HCT116 (cell line): ENCODE measurements at regions of chr19 and their contacts with region 1.

Region 1: DNA sequence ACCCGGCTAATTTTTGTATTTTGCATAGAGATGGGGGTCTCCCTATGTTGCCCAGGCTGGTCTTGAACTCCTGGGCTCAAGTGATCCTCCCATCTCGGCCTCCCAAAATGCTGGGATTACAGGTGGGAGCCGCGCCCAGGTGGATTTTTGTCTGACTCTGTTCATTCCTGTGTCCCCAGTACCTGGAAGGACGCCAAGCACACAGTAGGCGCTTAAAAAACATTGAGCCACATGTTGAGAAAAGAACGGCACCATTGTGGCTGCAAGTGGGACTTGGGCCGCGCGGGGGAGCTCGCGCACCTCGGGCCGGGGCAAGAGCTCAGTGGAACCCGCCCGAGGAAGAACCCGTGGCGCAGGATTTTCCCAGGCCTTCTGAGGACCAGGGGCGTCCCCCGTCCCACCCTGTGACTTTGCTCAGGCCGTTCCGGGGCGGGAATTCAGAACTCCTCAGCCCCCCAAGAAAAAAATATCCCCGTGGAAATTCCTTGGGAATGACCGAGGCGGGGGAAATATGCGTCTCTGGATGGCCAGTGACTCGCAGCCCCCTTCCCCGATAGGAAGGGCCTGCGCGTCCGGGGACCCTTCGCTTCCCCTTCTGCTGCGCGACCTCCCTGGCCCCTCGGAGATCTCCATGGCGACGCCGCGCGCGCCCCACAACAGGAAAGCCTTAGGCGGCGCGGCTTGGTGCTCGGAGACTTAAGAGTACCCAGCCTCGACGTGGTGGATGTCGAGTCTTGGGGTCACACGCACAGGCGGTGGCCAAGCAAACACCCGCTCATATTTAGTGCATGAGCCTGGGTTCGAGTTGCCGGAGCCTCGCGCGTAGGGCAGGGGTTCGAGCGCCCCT is 1.4 kb upstream of the ICAM1 start:
- DNase-seq: peak; percentile 47
- ATAC-seq: peak; percentile 84
- H3K4me3 ChIP-seq: peak overlapping the region; percentile 22 to 28; a peak in 3 of 4 replicates
- H3K27ac ChIP-seq: peak overlapping the region; percentile 8; the same call in 1 of the 2 replicates
- H3K4me1 ChIP-seq: peaks cover 7 to 22% of the 10 kb centered on the region in 2 experiments; a peak in 3 of 4 replicates
- H3K27me3 ChIP-seq: no peaks in the 10 kb centered on the region
- CTCF ChIP-seq: peak; percentile 91 to 95 (median 94)
- POLR2A ChIP-seq: no peak
- RAD21 ChIP-seq: peak; percentile 99

Region 2: GRCh38 chr19:10243606-10244005 is 25.9 kb before region 1 on chr19:
- CTCF ChIA-PET with region 1: no interaction called
- POLR2A ChIA-PET with region 1: no interaction called
- RAD21 ChIA-PET with region 1: no interaction called
- intact Hi-C with region 1: no loop called
- DNase-seq: no peak
- ATAC-seq: no peak
- H3K4me3 ChIP-seq: no peak overlapping the region
- H3K27ac ChIP-seq: no peak overlapping the region
- H3K4me1 ChIP-seq: peaks cover 35 to 54% of the 10 kb centered on the region in 2 experiments
- H3K27me3 ChIP-seq: no peaks in the 10 kb centered on the region
- CTCF ChIP-seq: no peak
- POLR2A ChIP-seq: no peak
- RAD21 ChIP-seq: no peak

Region 3: DNA sequence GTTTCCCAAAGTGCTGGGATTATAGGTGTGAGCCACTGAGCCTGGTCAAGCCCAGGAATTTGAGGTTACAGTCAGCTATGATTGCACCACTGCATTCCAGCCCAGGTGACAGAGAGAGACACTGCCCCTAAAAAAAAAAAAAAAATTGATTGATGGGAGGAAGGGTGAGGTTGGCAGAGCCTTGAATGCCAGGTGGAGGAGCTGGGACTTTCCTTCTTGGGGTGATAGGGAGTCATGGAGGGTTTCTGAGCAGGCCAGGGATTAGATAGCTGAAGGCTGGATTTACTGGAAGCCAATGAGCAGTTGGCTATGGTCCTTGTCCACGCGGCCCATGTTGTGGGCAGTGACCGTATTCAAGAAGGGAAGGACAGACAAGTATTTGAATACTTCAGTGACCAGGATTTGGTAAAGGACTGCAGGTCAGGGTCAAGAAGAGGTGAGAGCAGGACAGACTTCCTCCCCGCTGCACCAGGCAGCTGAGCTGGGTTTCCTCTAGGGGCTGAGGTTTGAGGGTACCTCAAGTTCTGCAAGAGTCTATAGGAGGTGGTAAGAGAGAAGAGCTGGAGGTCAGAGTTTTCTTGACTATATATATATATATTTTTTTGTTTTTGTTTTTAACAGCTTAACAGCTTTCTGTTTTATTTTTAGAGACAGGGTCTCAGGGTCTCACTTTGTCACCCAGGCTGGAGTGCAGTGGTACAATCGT is 10.3 kb after region 1 on chr19:
- CTCF ChIA-PET with region 1: interaction called, 10 read pairs
- POLR2A ChIA-PET with region 1: interaction called, 3 read pairs
- RAD21 ChIA-PET with region 1: no interaction called
- intact Hi-C with region 1: no loop called
- DNase-seq: no peak
- ATAC-seq: no peak
- H3K4me3 ChIP-seq: no peak overlapping the region
- H3K27ac ChIP-seq: no peak overlapping the region
- H3K4me1 ChIP-seq: peaks cover 9 to 18% of the 10 kb centered on the region in 2 experiments
- H3K27me3 ChIP-seq: no peaks in the 10 kb centered on the region
- CTCF ChIP-seq: no peak
- POLR2A ChIP-seq: no peak
- RAD21 ChIP-seq: no peak

Region 4: GRCh38 chr19:10388957-10389356 is 119.4 kb after region 1 on chr19:
- CTCF ChIA-PET with region 1: interaction called, 131 read pairs
- POLR2A ChIA-PET with region 1: interaction called, 9 read pairs
- RAD21 ChIA-PET with region 1: interaction called, 14 to 31 read pairs
- intact Hi-C with region 1: loop called (anchors 1 kb)
- DNase-seq: peak; percentile 77
- ATAC-seq: peak; percentile 67
- H3K4me3 ChIP-seq: no peak overlapping the region
- H3K27ac ChIP-seq: no peak overlapping the region
- H3K4me1 ChIP-seq: 0 out of 4 replicates have a peak, but pooled peaks cover 0 to 3% of the 10 kb centered on the region in 2 experiments
- H3K27me3 ChIP-seq: no peaks in the 10 kb centered on the region
- CTCF ChIP-seq: peak; percentile 92 to 97 (median 97)
- POLR2A ChIP-seq: no peak
- RAD21 ChIP-seq: peak; percentile 95